ENCODE measurements at regions of chrX and their contacts with region 1.

Region 1: GRCh38 chrX:43958529-43958928 is 14.7 kb downstream of the NDP start:
- DNase-seq: peak; percentile 68 to 88
- H3K4me3 ChIP-seq: no peak overlapping the region
- H3K4me1 ChIP-seq: no peaks in the 10 kb centered on the region
- H3K27me3 ChIP-seq: no peaks in the 10 kb centered on the region; the same call in none of the 2 replicates

Region 2: GRCh38 chrX:43836435-43837184 is 121.9 kb before region 1 on chrX:
- in situ Hi-C with region 1: loop called (anchors 10 kb)
- DNase-seq: peak in 1 of 2 experiments; percentile 27
- H3K4me3 ChIP-seq: no peak overlapping the region
- H3K4me1 ChIP-seq: peaks cover 3% of the 10 kb centered on the region; the same call in 1 of the 2 replicates
- H3K27me3 ChIP-seq: no peaks in the 10 kb centered on the region

Region 3: GRCh38 chrX:44238206-44238605 is 279.7 kb after region 1 on chrX:
- in situ Hi-C with region 1: loop called (anchors 5 kb)
- DNase-seq: no peak
- H3K4me3 ChIP-seq: no peak overlapping the region
- H3K4me1 ChIP-seq: no peaks in the 10 kb centered on the region
- H3K27me3 ChIP-seq: no peaks in the 10 kb centered on the region

Measured in HAP-1 (cell line).